BJ (cell line): ENCODE measurements at regions of chr10 and their contacts with region 1.

Region 1: GRCh38 chr10:73096449-73097304 is at the start of gene P4HA1:
- DNase-seq: peak; percentile 89
- H3K4me3 ChIP-seq: peak within 1 kb of the TSS; percentile 72
- H3K27me3 ChIP-seq: no peaks in the 10 kb centered on the region
- CTCF ChIP-seq: peak; percentile 72
- polyA plus RNA-seq, gene P4HA1: 91.7 and 260 TPM in 2 replicates

Region 2: DNA sequence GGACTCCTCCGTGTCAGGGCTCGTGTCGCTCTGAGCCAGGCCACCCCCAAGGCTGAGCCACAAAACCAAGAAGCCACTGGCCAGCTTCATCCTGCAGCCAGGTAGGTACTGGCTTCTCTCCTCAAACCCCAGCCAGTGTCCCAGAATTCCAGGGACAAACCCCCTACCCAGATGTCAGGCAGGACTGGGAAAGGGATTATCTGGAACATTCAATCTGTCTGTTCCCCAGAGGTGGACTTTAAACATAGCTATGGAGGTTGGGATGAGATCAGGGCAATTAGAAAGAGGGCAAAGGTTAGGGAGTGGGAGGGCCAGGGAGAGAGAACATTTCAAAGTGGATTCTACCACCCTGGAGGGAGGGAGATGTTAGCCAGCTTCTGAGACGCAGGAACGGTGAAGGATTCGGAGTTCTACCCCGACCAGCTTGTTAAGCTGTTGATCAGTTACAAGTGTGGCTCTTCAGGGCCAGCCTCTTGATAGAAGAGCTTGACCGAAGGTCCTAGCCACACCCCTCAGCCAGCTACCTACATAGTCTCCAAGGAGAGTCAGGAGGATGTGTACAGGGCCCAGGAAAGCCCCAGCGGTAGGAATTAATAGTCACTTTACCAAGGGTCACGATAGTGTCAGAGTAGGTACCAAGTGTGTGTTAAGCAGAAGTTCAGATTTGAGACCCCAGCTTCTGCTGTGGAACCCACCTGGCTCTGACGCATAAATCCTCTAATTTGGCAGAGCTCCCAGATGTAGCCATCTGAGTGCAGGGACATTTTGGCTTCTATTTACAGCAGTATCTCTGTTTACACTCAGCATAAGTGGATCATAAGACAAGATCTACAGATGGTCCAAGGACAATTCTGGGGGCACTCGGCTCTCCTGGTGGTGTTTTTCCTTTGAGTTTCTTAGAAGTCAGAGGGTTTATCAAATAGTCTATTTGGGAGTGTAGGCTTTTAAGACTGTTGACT is 141.8 kb before region 1 on chr10 and contains the start of gene PLA2G12B:
- CTCF ChIA-PET with region 1: no interaction called
- POLR2A ChIA-PET with region 1: no interaction called
- DNase-seq: no peak
- H3K4me3 ChIP-seq: no peak within 1 kb of the TSS
- H3K27me3 ChIP-seq: peaks cover 7% of the 10 kb centered on the region
- CTCF ChIP-seq: no peak
- polyA plus RNA-seq, gene PLA2G12B: not detected in 2 replicates

Region 3: DNA sequence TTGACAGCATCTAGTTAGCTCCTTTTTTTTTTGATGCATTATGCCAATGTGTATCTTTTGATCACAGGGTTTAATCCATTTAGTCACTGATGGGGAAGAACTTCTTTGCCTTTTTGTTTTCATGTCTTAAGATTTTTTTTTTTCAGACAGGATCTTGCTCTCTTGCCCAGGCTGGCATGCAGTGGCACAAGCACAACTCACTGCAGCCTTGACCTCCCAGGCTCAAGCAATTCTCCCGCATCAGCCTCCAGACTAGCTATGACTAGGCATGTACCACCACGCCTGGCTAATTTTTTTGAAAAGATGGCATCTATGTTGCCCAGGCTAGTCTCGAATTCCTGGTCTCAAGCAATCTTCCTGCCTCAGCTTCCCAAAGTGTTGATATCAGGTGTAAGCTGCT is 95.7 kb before region 1 on chr10:
- CTCF ChIA-PET with region 1: no interaction called
- POLR2A ChIA-PET with region 1: interaction called, 10 read pairs
- DNase-seq: no peak
- H3K4me3 ChIP-seq: no peak overlapping the region
- H3K27me3 ChIP-seq: no peaks in the 10 kb centered on the region
- CTCF ChIP-seq: no peak

Region 4: DNA sequence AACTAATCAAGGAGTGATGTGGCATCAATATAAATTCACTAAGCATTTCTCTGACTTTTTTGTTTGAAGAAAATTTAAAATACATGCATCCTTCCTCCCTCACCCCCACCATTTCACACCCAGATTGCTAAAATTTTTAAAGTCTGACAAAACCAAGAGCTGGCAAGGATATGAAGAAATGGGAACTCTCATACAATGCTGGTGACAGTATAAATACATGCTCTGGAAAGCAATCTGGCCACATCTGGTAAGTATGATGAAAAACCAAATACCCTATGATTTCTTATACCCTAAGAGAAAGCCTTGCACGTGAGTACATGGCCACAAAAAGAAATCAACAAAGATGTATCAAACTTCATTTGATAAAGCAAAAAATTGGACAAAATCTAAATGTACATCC is 31.2 kb before region 1 on chr10:
- CTCF ChIA-PET with region 1: interaction called, 3 read pairs
- POLR2A ChIA-PET with region 1: interaction called, 15 read pairs
- DNase-seq: no peak
- H3K4me3 ChIP-seq: no peak overlapping the region
- H3K27me3 ChIP-seq: no peaks in the 10 kb centered on the region
- CTCF ChIP-seq: no peak

Region 5: GRCh38 chr10:73232887-73233286 is 136.2 kb after region 1 on chr10:
- CTCF ChIA-PET with region 1: no interaction called
- POLR2A ChIA-PET with region 1: no interaction called
- DNase-seq: no peak
- H3K4me3 ChIP-seq: no peak overlapping the region
- H3K27me3 ChIP-seq: no peaks in the 10 kb centered on the region
- CTCF ChIP-seq: no peak

Region 6: DNA sequence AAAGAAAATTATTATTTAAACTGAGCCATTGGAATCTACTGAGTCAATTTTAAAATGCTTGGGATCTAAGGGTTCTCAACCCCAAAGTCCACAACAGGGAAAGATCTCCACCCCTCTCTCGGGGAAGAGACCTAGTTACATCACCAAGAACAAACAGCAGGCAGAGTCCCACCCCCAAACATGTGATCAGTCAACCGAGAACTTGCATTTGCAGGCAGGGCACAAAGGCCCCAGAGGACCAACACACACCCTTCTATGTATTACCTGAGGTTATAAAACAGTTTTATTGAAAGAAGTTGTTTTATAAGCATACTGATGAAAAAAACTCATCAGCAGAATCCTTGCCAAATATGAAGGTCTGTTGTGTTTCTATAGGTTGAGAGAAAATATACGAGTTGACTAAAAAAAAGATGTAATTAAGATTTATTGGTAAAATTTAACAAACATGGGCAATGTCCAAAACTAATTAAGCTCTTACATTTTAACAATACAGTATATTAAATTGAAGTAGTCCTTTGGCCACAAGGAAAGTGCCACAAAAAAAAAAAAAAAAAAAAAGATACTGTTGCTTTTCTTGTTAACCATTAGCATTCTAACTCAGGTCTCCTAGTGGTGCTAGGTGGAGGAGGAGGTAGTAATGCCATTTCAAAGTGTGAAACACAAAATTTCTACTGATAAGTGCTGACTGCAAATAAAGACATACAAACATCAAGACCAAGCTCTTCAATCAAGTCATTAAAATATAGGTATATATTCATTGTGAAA is 495.4 kb after region 1 on chr10:
- CTCF ChIA-PET with region 1: no interaction called
- POLR2A ChIA-PET with region 1: no interaction called
- DNase-seq: peak; percentile 34
- H3K4me3 ChIP-seq: no peak overlapping the region
- H3K27me3 ChIP-seq: no peaks in the 10 kb centered on the region
- CTCF ChIP-seq: no peak

Region 7: GRCh38 chr10:73931767-73932619 is 835.3 kb after region 1 on chr10:
- CTCF ChIA-PET with region 1: no interaction called
- POLR2A ChIA-PET with region 1: no interaction called
- DNase-seq: no peak
- H3K4me3 ChIP-seq: no peak overlapping the region
- H3K27me3 ChIP-seq: no peaks in the 10 kb centered on the region
- CTCF ChIP-seq: no peak

Region 8: DNA sequence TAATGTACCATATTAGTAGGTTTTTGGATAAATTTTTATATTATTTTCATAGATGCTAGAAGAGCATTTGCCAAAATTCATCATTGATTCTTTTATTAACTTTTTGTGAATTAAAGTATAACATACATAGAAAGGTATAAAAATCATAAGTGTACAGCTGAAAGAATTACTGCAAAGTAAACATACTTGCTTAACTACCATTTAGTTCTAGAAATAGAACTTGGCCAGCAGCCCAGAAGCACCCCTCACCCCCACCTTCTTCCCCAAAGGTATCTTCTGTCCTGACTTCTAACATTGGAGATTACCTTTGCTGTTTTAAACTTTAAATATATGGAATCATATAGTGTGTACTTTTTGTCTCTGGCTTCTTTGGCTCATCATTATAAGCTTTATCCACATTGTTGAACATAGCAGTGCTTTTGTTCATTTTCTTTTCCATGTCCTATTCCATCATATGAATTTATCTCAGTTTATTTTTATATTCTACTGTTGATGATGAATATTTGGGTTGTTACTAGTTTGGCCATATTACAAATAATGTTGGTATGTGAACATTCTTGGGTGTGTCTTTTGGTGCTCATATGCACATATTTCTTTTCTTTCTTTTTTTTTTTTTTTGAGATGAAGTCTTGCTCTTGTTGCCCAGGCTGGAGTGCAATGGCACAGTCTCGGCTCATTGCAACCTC is 1197.2 kb after region 1 on chr10:
- CTCF ChIA-PET with region 1: no interaction called
- POLR2A ChIA-PET with region 1: interaction called, 12 read pairs
- DNase-seq: peak; percentile 61
- H3K4me3 ChIP-seq: no peak overlapping the region
- H3K27me3 ChIP-seq: no peaks in the 10 kb centered on the region
- CTCF ChIP-seq: no peak